ENCODE measurements at regions of chr9 and their contacts with region 1.

Region 1: GRCh38 chr9:107425101-107426045 is 64.2 kb downstream of the KLF4 start:
- DNase-seq: peak; percentile 55 to 76 (median 73)
- H3K4me3 ChIP-seq: peak overlapping the region in 5 of 7 experiments; percentile 31 to 72 (median 58)
- H3K27ac ChIP-seq: no peak overlapping the region
- H3K4me1 ChIP-seq: peaks cover 0 to 5% (median 4%) of the 10 kb centered on the region in 4 experiments
- H3K27me3 ChIP-seq: no peaks in the 10 kb centered on the region

Region 2: DNA sequence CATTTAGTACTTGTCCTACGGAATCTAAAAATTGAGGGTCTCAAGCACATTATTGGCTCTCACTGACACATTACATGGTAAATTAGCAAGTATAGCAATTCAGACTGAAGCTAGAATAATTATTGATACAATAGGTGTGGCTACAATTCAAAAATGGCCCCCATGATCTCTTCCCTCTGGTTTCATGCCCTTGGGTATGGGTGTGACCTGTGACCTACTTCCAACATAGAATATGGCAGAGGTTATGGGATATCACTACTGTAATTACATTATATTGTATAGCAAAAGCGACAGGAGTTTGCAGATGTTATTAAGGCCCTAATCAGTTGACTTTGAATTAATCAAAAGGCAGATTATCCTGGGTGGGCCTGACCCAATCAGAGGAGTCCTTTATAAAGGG is 12.1 kb before region 1 on chr9:
- CTCF ChIA-PET with region 1: interaction called, 17 read pairs
- POLR2A ChIA-PET with region 1: no interaction called
- DNase-seq: no peak
- H3K4me3 ChIP-seq: no peak overlapping the region
- H3K27ac ChIP-seq: no peak overlapping the region
- H3K4me1 ChIP-seq: no peaks in the 10 kb centered on the region
- H3K27me3 ChIP-seq: no peaks in the 10 kb centered on the region